Left cardiac atrium (tissue), 4 donors: ENCODE measurements at regions of chr12 and their contacts with region 1.

Region 1: GRCh38 chr12:122944623-122945592 is 21.4 kb downstream of the ABCB9 start:
- DNase-seq: no peak
- ATAC-seq: peak in 1 of 2 donors; percentile 10

Region 2: GRCh38 chr12:121729021-121729420 is 1215.9 kb before region 1 on chr12:
- intact Hi-C with region 1: no loop called
- DNase-seq: no peak
- ATAC-seq: no peak

Region 3: GRCh38 chr12:122902854-122903692 is 41.8 kb before region 1 on chr12:
- intact Hi-C with region 1: loop called in 1 of 2 experiments (anchors 5 kb)
- DNase-seq: no peak
- ATAC-seq: no peak

Region 4: GRCh38 chr12:123034865-123035264 is 90.0 kb after region 1 on chr12:
- intact Hi-C with region 1: no loop called
- DNase-seq: no peak
- ATAC-seq: peak; percentile 55 to 57

Region 5: DNA sequence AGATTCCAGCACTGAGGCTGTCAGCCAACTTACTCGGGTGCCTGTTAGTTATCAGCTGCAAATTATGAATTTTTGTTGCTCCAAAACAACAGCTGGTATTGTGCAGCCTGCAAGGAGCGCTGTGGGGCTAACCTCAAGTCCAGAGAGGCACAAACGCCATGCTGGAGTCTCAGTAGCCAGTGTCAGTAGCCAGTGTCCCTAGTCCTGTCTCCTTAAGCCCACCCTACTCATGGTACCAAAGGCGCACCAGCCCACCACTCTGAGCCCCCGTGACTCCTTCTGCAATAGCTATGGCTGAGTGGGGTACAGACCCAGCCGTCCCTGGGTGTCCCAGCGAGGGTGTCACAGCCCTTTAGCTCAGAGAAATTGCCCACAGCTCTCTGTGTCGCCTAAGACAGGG is 100.7 kb after region 1 on chr12:
- intact Hi-C with region 1: no loop called
- DNase-seq: no peak
- ATAC-seq: no peak